Endothelial cell of umbilical vein (primary cell): ENCODE measurements at regions of chr3 and their contacts with region 1.

Region 1: GRCh38 chr3:66407611-66408218 is 93.1 kb downstream of the LRIG1 start:
- DNase-seq: peak; percentile 72
- H3K4me3 ChIP-seq: no peak overlapping the region
- H3K27ac ChIP-seq: no peak overlapping the region
- H3K4me1 ChIP-seq: no peaks in the 10 kb centered on the region
- H3K27me3 ChIP-seq: no peaks in the 10 kb centered on the region
- CTCF ChIP-seq: peak; percentile 80 to 94
- POLR2A ChIP-seq: no peak

Region 2: GRCh38 chr3:66276705-66277274 is 130.9 kb before region 1 on chr3:
- CTCF ChIA-PET with region 1: interaction called, 7 read pairs
- POLR2A ChIA-PET with region 1: no interaction called
- dilution Hi-C with region 1: no loop called
- intact Hi-C with region 1: loop called (anchors 1 kb)
- DNase-seq: peak; percentile 88
- H3K4me3 ChIP-seq: no peak overlapping the region
- H3K27ac ChIP-seq: no peak overlapping the region
- H3K4me1 ChIP-seq: no peaks in the 10 kb centered on the region
- H3K27me3 ChIP-seq: no peaks in the 10 kb centered on the region
- CTCF ChIP-seq: peak; percentile 38 to 41
- POLR2A ChIP-seq: no peak

Region 3: GRCh38 chr3:66428733-66429132 is 21.0 kb after region 1 on chr3:
- CTCF ChIA-PET with region 1: interaction called, 13 read pairs
- POLR2A ChIA-PET with region 1: no interaction called
- dilution Hi-C with region 1: no loop called
- intact Hi-C with region 1: no loop called
- DNase-seq: peak; percentile 100
- H3K4me3 ChIP-seq: peak overlapping the region in 1 of 3 experiments; percentile 41
- H3K27ac ChIP-seq: peak overlapping the region; percentile 94
- H3K4me1 ChIP-seq: peaks cover 23% of the 10 kb centered on the region
- H3K27me3 ChIP-seq: no peaks in the 10 kb centered on the region
- CTCF ChIP-seq: no peak
- POLR2A ChIP-seq: peak; percentile 56

Region 4: GRCh38 chr3:66472313-66473134 is 64.8 kb after region 1 on chr3:
- CTCF ChIA-PET with region 1: interaction called, 11 read pairs
- POLR2A ChIA-PET with region 1: interaction called, 4 read pairs
- dilution Hi-C with region 1: no loop called
- intact Hi-C with region 1: loop called (anchors 5 kb)
- DNase-seq: peak; percentile 94
- H3K4me3 ChIP-seq: peak overlapping the region in 1 of 3 experiments; percentile 0
- H3K27ac ChIP-seq: peak overlapping the region; percentile 92
- H3K4me1 ChIP-seq: peaks cover 54% of the 10 kb centered on the region
- H3K27me3 ChIP-seq: no peaks in the 10 kb centered on the region
- CTCF ChIP-seq: no peak
- POLR2A ChIP-seq: peak; percentile 30

Region 5: GRCh38 chr3:66500576-66501482 is 93.1 kb after region 1 on chr3 and contains the start of gene LRIG1:
- CTCF ChIA-PET with region 1: interaction called, 10 read pairs
- POLR2A ChIA-PET with region 1: interaction called, 6 read pairs
- dilution Hi-C with region 1: no loop called
- intact Hi-C with region 1: loop called (anchors 1 kb)
- DNase-seq: peak; percentile 99
- H3K4me3 ChIP-seq: peak within 1 kb of the TSS; percentile 70 to 93 (median 90)
- H3K27ac ChIP-seq: peak within 1 kb of the TSS; percentile 69
- H3K4me1 ChIP-seq: peaks cover 14% of the 10 kb centered on the region
- H3K27me3 ChIP-seq: peaks cover 13 to 18% of the 10 kb centered on the region in 2 experiments
- CTCF ChIP-seq: peak in 1 of 2 donors; percentile 48
- POLR2A ChIP-seq: peak; percentile 80
- total RNA-seq, gene LRIG1: 42.0 and 52.2 TPM in 2 replicates

Region 6: DNA sequence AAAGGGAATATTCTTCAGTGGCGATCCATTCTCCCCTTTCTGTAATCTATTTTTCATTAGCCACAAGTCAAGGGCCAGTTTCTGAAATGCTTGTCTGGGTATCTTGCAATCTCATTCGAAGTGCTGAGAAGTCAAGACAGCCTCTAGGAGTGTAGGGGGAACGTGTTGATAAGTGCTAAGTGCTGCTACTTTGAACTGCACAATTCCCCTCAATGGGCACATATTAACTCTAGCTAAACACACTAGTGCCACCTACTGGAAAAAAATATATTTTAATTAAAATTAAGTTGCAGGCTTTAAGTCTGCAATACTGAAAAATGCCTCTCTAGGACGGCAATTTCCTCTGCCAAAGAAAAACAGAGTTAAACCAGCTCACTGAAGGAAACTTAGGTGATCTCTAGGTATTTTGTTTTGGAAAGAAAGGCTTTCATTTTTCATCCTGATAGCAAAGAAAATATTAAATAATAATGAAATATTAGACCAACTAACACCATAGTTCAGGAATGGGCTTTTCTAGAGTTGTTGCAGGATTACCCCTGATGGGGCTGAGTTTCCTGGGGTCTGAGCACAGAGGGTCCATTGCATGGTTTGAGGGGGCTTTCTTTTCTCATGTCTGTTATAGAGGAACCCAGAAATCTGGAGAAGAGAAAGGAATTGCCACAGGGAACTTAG is 408.5 kb after region 1 on chr3:
- CTCF ChIA-PET with region 1: interaction called, 19 read pairs
- POLR2A ChIA-PET with region 1: no interaction called
- dilution Hi-C with region 1: no loop called
- intact Hi-C with region 1: loop called (anchors 1 kb)
- DNase-seq: peak; percentile 64
- H3K4me3 ChIP-seq: no peak overlapping the region
- H3K27ac ChIP-seq: no peak overlapping the region
- H3K4me1 ChIP-seq: no peaks in the 10 kb centered on the region
- H3K27me3 ChIP-seq: peaks cover 17 to 20% of the 10 kb centered on the region in 2 experiments
- CTCF ChIP-seq: peak in 1 of 2 donors; percentile 26
- POLR2A ChIP-seq: no peak

Region 7: DNA sequence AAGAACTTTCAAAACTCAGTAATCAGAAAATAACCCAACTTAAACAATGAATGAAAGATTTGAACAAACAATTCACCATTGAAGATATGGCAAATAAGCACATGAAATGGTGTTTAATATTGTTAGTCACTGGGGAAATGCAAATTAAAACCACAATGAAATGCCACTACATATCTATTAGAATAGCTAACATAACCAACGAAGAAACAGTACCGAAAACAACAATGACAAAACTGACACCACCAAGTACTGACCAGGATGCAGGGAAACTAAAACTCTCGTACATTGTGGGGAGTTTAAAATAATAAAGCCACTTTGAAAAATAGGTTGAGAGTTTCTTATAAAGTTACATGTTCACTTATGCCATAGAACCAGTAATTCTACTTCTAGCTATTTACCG is 659.5 kb after region 1 on chr3:
- CTCF ChIA-PET with region 1: no interaction called
- POLR2A ChIA-PET with region 1: no interaction called
- dilution Hi-C with region 1: no loop called
- intact Hi-C with region 1: no loop called
- DNase-seq: no peak
- H3K4me3 ChIP-seq: no peak overlapping the region
- H3K27ac ChIP-seq: no peak overlapping the region
- H3K4me1 ChIP-seq: peaks cover 4% of the 10 kb centered on the region
- H3K27me3 ChIP-seq: no peaks in the 10 kb centered on the region
- CTCF ChIP-seq: no peak
- POLR2A ChIP-seq: no peak